ENCODE measurements at regions of chr7 and their contacts with region 1.

Region 1: GRCh38 chr7:116942504-116942903 is 10.8 kb upstream of the ST7 start:
- DNase-seq: no peak
- H3K4me3 Mint-ChIP-seq: no peak overlapping the region
- H3K27ac Mint-ChIP-seq: no peak overlapping the region
- H3K4me1 Mint-ChIP-seq: no peaks in the 10 kb centered on the region
- H3K27me3 Mint-ChIP-seq: no peaks in the 10 kb centered on the region
- CTCF ChIP-seq: no peak

Region 2: DNA sequence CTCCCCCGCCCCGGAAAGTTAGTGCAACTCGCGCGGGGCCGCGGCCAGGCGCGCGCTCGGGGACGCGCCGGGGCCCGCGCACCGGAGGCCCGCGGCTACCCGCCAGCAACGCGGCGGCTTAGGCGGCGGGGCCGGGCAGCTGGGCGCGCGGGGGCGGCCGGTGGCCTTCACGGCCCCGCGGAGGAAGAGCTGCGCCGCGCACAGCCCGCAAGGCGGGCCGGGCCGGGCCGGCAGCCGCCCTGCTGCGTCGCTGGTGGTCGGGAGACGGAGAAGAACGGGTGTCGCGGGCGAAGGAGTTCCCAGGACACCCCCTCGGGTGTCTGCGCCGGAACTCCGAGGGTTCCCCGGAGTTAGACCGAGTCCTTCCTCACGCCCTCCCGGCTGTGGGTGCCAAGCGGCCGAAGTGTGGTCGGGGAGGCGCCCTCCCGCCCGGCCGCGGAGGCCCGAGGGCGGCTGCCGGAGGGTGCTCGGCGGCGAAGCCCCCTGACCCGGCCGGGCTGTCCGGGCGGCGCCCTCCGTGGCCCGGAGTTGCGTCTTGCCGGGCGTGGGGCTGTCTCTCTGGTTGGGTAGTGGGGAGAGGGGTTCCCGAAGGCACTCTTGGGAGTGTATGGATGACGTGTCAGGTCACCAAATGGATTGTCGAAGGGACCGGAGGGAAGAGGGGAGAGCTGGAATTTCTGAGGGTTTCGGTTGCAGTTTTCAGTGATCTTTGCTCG is 11.4 kb after region 1 on chr7:
- CTCF ChIA-PET with region 1: interaction called, 4 read pairs
- POLR2A ChIA-PET with region 1: interaction called, 17 read pairs
- intact Hi-C with region 1: no loop called
- DNase-seq: peak; percentile 79
- H3K4me3 Mint-ChIP-seq: peak overlapping the region; percentile 91
- H3K27ac Mint-ChIP-seq: peak overlapping the region; percentile 93
- H3K4me1 Mint-ChIP-seq: peaks cover 21% of the 10 kb centered on the region
- H3K27me3 Mint-ChIP-seq: no peaks in the 10 kb centered on the region
- CTCF ChIP-seq: no peak